Mucosa of descending colon (tissue), 3 donors: ENCODE measurements at regions of chrX and their contacts with region 1.

Region 1: GRCh38 chrX:15564981-15565579 is 35.7 kb downstream of the ACE2 start:
- DNase-seq: peak; percentile 53 to 78 (median 67)
- ATAC-seq: peak; percentile 97
- H3K4me3 ChIP-seq: no peak overlapping the region
- H3K4me1 ChIP-seq: no peaks in the 10 kb centered on the region
- CTCF ChIP-seq: peak; percentile 6

Region 2: GRCh38 chrX:15497865-15498264 is 67.2 kb before region 1 on chrX:
- intact Hi-C with region 1: loop called in 1 of 2 experiments (anchors 5 kb)
- DNase-seq: peak in 2 of 3 donors; percentile 45 to 74
- ATAC-seq: peak; percentile 45
- H3K4me3 ChIP-seq: no peak overlapping the region
- H3K4me1 ChIP-seq: no peaks in the 10 kb centered on the region
- CTCF ChIP-seq: no peak

Region 3: DNA sequence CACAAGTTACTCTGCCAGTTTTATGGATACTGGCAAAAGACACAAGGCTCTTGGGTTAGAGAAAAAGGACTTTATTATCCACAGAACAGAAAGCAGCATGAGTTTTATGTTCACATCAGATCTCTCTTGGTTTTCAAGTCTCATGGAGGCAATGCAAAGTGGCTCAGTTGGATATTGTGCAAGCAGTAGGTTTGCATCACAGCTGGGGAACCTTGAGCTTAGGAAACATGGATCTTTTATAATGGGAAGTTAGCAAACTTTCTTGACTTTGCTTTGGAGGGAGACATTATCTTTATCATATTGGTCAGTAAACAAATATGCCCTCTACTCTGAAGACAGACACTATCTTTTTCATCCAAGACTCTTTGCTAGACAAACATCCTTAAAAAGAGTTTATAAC is 449.1 kb after region 1 on chrX:
- intact Hi-C with region 1: no loop called
- DNase-seq: no peak
- ATAC-seq: no peak
- H3K4me3 ChIP-seq: no peak overlapping the region
- H3K4me1 ChIP-seq: no peaks in the 10 kb centered on the region
- CTCF ChIP-seq: no peak